GM13976 (cell line): ENCODE measurements at regions of chr10 and their contacts with region 1.

Region 1: GRCh38 chr10:89426230-89426868 is 12.0 kb downstream of the IFIT5 start:
- DNase-seq: peak; percentile 48
- CTCF ChIP-seq: peak; percentile 57

Region 2: DNA sequence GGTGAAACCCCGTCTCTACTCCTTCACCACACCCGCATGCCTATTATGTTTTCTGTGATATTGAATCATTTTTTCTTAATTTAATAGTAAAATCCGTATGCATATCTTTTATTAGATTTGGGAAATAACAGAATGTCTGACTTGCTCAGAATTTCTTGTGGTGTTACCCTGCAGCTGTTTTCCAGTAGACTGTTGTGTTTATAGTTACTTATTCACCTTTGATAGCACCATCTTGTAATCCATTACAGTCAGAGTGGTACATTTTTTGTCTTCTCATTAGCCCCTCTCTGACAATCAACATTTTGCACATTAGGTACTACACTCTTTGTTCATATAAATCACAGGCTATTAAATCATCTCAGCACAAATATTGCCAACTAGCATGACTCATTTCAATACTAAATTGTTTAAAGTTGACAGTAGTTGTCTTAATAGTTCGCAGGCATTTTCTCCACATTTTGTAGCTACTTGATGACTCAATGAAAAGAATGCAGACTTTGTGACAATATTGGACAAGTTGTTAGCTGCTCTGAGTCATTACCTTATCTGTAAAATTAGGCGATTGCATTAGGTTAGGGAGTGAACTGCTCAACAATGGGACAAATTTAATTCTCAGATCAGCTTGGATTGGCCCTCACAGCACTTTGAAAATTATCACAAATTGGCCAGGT is 126.8 kb after region 1 on chr10:
- in situ Hi-C with region 1: loop called (anchors 10 kb)
- DNase-seq: no peak
- CTCF ChIP-seq: no peak